Activated CD4-positive, alpha-beta T cell treated with anti-CD3 and anti-CD28 coated beads for 36 hours (primary cell): ENCODE measurements at regions of chr21 and their contacts with region 1.

Region 1: GRCh38 chr21:44011980-44012527 is at the start of gene TRAPPC10:
- DNase-seq: peak; percentile 90
- ATAC-seq: peak; percentile 72
- H3K4me3 Mint-ChIP-seq: peak within 1 kb of the TSS; percentile 87
- H3K27ac Mint-ChIP-seq: peak within 1 kb of the TSS; percentile 93
- H3K4me1 Mint-ChIP-seq: peaks cover 42% of the 10 kb centered on the region
- H3K27me3 Mint-ChIP-seq: no peaks in the 10 kb centered on the region
- total RNA-seq, gene TRAPPC10: 40.2 to 58.7 TPM

Region 2: DNA sequence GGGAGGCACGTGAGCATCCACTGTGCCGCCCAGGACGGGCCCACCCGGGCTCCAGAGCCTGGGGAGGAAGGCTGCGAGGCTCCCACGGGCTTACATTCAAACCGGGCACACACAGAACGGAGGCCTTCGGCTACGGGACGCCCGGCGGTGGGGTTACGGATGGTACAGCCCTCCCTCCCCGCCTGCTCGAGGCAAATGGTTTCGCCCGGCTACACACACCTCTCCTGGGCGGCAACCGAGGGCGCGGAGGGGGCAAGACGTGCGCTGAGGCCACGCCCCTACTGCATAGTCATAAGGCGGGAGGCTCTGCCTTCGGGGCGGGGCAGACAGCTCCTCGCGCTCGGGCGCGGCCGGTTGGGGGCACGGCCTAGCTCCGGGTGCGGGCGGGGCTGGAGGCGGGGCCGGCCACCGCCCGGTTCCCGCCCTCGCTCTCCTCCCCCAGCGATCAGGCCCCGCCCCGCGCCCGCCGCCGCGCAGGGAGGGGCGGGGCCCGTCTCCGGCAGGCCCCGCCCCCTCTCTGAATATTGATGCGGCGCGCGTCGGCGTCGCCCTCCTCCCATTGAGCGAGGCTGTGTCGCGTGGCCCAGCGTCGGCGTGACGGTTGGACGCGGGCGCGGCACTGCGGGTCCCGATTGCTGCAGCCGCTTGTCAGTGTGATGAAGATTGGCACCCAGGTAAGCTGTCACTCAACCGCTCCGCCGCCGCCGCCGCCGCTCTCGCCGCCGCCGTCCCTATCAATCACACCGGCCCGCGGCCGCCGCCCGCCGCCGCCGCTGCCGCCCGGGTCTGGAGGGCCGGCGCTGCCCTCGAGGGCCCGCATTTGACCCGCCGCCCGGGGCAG is 1037.8 kb before region 1 on chr21 and contains the start of gene PKNOX1:
- CTCF ChIA-PET with region 1: no interaction called
- POLR2A ChIA-PET with region 1: no interaction called
- intact Hi-C with region 1: loop called in 1 of 2 experiments (anchors 1 kb)
- DNase-seq: peak; percentile 100
- ATAC-seq: peak; percentile 89
- H3K4me3 Mint-ChIP-seq: peak within 1 kb of the TSS; percentile 85
- H3K27ac Mint-ChIP-seq: peak within 1 kb of the TSS; percentile 94
- H3K4me1 Mint-ChIP-seq: peaks cover 30% of the 10 kb centered on the region
- H3K27me3 Mint-ChIP-seq: no peaks in the 10 kb centered on the region
- total RNA-seq, gene PKNOX1: 13.4 to 14.8 TPM

Region 3: DNA sequence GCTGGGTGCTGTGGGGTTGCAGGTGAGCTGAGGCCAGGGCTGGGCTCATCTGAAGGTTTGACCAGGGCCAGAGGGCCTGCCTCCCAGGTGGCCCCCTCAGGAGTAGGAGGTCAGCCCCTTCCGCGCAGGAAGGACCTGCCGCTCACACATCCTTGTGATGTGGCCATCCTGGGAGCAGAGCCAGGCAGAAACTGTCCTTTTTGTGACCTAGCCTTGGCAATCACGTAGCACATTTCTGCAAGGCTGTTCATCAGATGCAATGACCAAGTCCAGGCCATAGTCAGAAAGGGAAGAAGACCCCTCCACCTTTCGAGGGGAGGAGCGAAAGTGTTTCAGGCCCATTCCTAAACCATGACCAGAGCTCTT is 55.4 kb before region 1 on chr21:
- CTCF ChIA-PET with region 1: no interaction called
- POLR2A ChIA-PET with region 1: no interaction called
- intact Hi-C with region 1: loop called in 1 of 2 experiments (anchors 2 kb)
- DNase-seq: no peak
- ATAC-seq: no peak
- H3K4me3 Mint-ChIP-seq: no peak overlapping the region
- H3K27ac Mint-ChIP-seq: peak overlapping the region; percentile 53
- H3K4me1 Mint-ChIP-seq: peaks cover 23% of the 10 kb centered on the region
- H3K27me3 Mint-ChIP-seq: no peaks in the 10 kb centered on the region

Region 4: GRCh38 chr21:44065428-44065827 is 53.4 kb after region 1 on chr21:
- CTCF ChIA-PET with region 1: interaction called, 7 read pairs
- POLR2A ChIA-PET with region 1: no interaction called
- intact Hi-C with region 1: loop called in 1 of 2 experiments (anchors 2 kb)
- DNase-seq: peak; percentile 88
- ATAC-seq: peak; percentile 94
- H3K4me3 Mint-ChIP-seq: peak overlapping the region; percentile 64
- H3K27ac Mint-ChIP-seq: peak overlapping the region; percentile 95
- H3K4me1 Mint-ChIP-seq: peaks cover 42% of the 10 kb centered on the region
- H3K27me3 Mint-ChIP-seq: no peaks in the 10 kb centered on the region

Region 5: DNA sequence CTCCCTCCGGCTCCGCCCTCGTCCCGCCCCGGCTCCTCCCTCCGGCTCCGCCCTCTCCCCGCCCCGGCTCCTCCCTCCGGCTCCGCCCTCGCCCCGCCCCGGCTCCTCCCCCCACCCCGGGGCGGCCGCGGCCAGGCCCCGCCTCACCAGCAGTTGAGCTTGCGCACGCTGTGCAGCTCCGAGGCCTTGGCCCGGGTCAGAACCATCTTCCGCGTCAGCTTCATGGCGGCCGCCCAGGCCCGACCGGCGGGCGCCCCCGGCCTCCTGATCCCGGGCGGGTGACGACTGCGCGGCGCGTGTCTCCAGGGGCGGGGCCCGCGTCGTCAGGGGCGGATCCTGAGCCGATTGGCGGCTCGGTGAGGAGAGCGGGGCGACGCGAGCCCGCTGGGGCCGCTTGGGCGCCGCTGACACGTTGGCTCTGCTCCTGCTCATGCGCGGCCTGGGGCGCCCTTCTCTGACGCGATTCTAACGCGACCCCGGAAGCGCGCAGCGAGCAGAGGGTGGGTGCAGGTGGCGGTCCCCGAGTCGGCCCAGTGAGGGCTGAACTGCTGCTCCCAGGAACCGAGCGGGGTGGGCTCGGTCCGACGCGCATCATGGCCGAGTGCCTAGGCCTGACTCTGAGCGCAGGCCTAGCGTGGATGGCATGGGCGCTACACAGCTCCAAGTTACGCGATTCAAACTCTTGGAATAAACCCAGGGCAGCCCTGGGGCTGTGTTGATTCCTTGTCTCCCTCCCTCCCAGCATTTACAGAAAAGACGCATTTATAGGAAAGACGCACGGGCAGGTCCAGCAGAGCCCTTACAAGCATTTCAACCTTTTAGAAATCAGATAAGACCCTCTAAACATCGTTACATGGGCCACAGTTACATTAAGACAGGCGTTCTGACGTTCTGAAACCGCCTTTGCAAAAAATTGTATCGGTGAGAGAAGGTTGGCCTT is 327.2 kb after region 1 on chr21 and contains the start of gene CFAP410:
- CTCF ChIA-PET with region 1: no interaction called
- POLR2A ChIA-PET with region 1: no interaction called
- intact Hi-C with region 1: loop called in 1 of 2 experiments (anchors 1 kb)
- DNase-seq: peak; percentile 97
- ATAC-seq: peak; percentile 97
- H3K4me3 Mint-ChIP-seq: peak within 1 kb of the TSS; percentile 96
- H3K27ac Mint-ChIP-seq: peak within 1 kb of the TSS; percentile 98
- H3K4me1 Mint-ChIP-seq: peaks cover 18% of the 10 kb centered on the region
- H3K27me3 Mint-ChIP-seq: no peaks in the 10 kb centered on the region
- total RNA-seq, gene CFAP410: 7.3 to 11.4 TPM

Region 6: GRCh38 chr21:44927587-44928461 is 915.8 kb after region 1 on chr21:
- CTCF ChIA-PET with region 1: no interaction called
- POLR2A ChIA-PET with region 1: no interaction called
- intact Hi-C with region 1: loop called in 1 of 2 experiments (anchors 10 kb)
- DNase-seq: peak; percentile 97
- ATAC-seq: peak; percentile 74
- H3K4me3 Mint-ChIP-seq: peak overlapping the region; percentile 90
- H3K27ac Mint-ChIP-seq: peak overlapping the region; percentile 94
- H3K4me1 Mint-ChIP-seq: peaks cover 80% of the 10 kb centered on the region
- H3K27me3 Mint-ChIP-seq: no peaks in the 10 kb centered on the region